Activated CD8-positive, alpha-beta T cell treated with anti-CD3 and anti-CD28 coated beads for 36 hours (primary cell): ENCODE measurements at regions of chr10 and their contacts with region 1.

Region 1: GRCh38 chr10:23314835-23315239 is 29.8 kb downstream of the C10orf67 start:
- DNase-seq: peak; percentile 64
- ATAC-seq: no peak
- H3K4me3 Mint-ChIP-seq: no peak overlapping the region
- H3K27ac Mint-ChIP-seq: no peak overlapping the region
- H3K4me1 Mint-ChIP-seq: no peaks in the 10 kb centered on the region
- H3K27me3 Mint-ChIP-seq: no peaks in the 10 kb centered on the region
- CTCF ChIP-seq: peak; percentile 75

Region 2: DNA sequence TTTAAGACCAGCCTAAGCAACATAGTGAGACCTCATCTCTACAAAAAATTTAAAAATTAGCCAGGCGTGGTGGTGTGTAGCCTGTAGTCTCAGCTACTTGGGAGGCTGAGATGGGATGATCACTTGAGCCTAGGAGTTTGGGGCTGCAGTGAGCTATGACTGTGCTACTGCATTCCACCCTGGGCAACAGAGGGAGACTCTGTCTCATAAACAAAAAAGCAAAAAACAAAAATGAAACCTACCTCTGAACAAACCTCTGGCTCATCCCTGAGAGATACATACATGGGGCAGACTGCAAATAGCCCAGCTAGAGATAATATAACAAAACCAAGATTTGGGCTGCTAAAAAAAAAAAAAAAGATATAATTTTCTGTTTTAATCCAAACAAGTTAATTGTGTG is 10.3 kb after region 1 on chr10:
- CTCF ChIA-PET with region 1: interaction called, 11 read pairs
- POLR2A ChIA-PET with region 1: no interaction called
- intact Hi-C with region 1: no loop called
- DNase-seq: no peak
- ATAC-seq: peak; percentile 34
- H3K4me3 Mint-ChIP-seq: no peak overlapping the region
- H3K27ac Mint-ChIP-seq: no peak overlapping the region
- H3K4me1 Mint-ChIP-seq: peaks cover 1% of the 10 kb centered on the region
- H3K27me3 Mint-ChIP-seq: peaks cover 16% of the 10 kb centered on the region
- CTCF ChIP-seq: no peak

Region 3: DNA sequence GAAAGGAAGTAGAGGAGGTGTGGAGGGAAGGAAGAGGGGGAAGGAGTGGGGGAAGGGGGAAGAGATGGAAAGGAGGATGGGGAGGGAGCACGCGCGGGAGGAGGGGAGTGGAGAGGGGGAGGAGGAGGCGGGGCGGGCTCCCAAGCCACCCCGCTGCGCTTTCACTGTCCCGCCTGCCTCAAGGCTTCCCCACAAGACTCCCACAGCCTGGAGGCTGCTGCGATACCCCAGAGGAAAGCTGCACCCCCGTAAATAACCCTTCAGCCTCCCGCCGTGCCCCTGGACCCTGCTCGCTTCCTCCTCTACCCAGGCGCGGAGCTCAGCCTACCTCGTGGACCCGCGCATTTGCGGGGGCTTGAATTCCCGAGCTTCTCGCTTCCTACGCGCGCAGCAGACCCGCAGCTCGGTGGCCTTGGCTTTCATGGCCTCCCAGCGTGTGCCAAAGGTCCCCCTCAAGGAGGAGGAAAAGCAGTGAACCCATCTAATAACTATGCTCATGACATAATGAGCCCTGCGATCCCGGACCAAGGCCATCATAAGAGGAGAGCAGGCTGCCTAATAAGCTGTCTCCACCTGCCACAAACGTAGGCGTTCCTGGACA is 29.5 kb after region 1 on chr10 and contains the start of gene C10orf67:
- CTCF ChIA-PET with region 1: no interaction called
- POLR2A ChIA-PET with region 1: no interaction called
- intact Hi-C with region 1: no loop called
- DNase-seq: no peak
- ATAC-seq: peak; percentile 49
- H3K4me3 Mint-ChIP-seq: peak within 1 kb of the TSS; percentile 74
- H3K27ac Mint-ChIP-seq: peak within 1 kb of the TSS; percentile 67
- H3K4me1 Mint-ChIP-seq: peaks cover 31% of the 10 kb centered on the region
- H3K27me3 Mint-ChIP-seq: peaks cover 8% of the 10 kb centered on the region
- CTCF ChIP-seq: no peak
- total RNA-seq, gene C10orf67: 0.25 to 0.32 TPM

Region 4: GRCh38 chr10:23516530-23516929 is 201.7 kb after region 1 on chr10:
- CTCF ChIA-PET with region 1: interaction called, 15 read pairs
- POLR2A ChIA-PET with region 1: interaction called, 3 read pairs
- intact Hi-C with region 1: no loop called
- DNase-seq: no peak
- ATAC-seq: no peak
- H3K4me3 Mint-ChIP-seq: no peak overlapping the region
- H3K27ac Mint-ChIP-seq: no peak overlapping the region
- H3K4me1 Mint-ChIP-seq: peaks cover 23% of the 10 kb centered on the region
- H3K27me3 Mint-ChIP-seq: peaks cover 14% of the 10 kb centered on the region
- CTCF ChIP-seq: peak; percentile 49

Region 5: GRCh38 chr10:23525406-23525805 is 210.6 kb after region 1 on chr10:
- CTCF ChIA-PET with region 1: interaction called, 30 read pairs
- POLR2A ChIA-PET with region 1: no interaction called
- intact Hi-C with region 1: loop called (anchors 1 kb)
- DNase-seq: no peak
- ATAC-seq: peak; percentile 51
- H3K4me3 Mint-ChIP-seq: no peak overlapping the region
- H3K27ac Mint-ChIP-seq: no peak overlapping the region
- H3K4me1 Mint-ChIP-seq: peaks cover 5% of the 10 kb centered on the region
- H3K27me3 Mint-ChIP-seq: peaks cover 3% of the 10 kb centered on the region
- CTCF ChIP-seq: peak; percentile 32

Region 6: GRCh38 chr10:23656735-23657134 is 341.9 kb after region 1 on chr10:
- CTCF ChIA-PET with region 1: interaction called, 10 read pairs
- POLR2A ChIA-PET with region 1: no interaction called
- intact Hi-C with region 1: no loop called
- DNase-seq: peak; percentile 13
- ATAC-seq: no peak
- H3K4me3 Mint-ChIP-seq: no peak overlapping the region
- H3K27ac Mint-ChIP-seq: no peak overlapping the region
- H3K4me1 Mint-ChIP-seq: peaks cover 3% of the 10 kb centered on the region
- H3K27me3 Mint-ChIP-seq: peaks cover 6% of the 10 kb centered on the region
- CTCF ChIP-seq: peak; percentile 47

Region 7: GRCh38 chr10:23702977-23703414 is 388.2 kb after region 1 on chr10:
- CTCF ChIA-PET with region 1: interaction called, 10 read pairs
- POLR2A ChIA-PET with region 1: no interaction called
- intact Hi-C with region 1: loop called (anchors 5 kb)
- DNase-seq: peak; percentile 78
- ATAC-seq: peak; percentile 90
- H3K4me3 Mint-ChIP-seq: no peak overlapping the region
- H3K27ac Mint-ChIP-seq: no peak overlapping the region
- H3K4me1 Mint-ChIP-seq: no peaks in the 10 kb centered on the region
- H3K27me3 Mint-ChIP-seq: peaks cover 19% of the 10 kb centered on the region
- CTCF ChIP-seq: peak; percentile 71